A549 (cell line): ENCODE measurements at regions of chr9 and their contacts with region 1.

Region 1: GRCh38 chr9:69971643-69972449 is 71.8 kb upstream of the MAMDC2 start:
- DNase-seq: peak; percentile 52 to 60
- ATAC-seq: peak; percentile 75 to 94
- H3K4me3 ChIP-seq: no peak overlapping the region
- H3K27ac ChIP-seq: no peak overlapping the region
- H3K4me1 ChIP-seq: no peaks in the 10 kb centered on the region
- CTCF ChIP-seq: peak; percentile 84
- EP300 ChIP-seq: no peak
- POLR2A ChIP-seq: no peak
- RAD21 ChIP-seq: peak; percentile 82 to 84

Region 2: DNA sequence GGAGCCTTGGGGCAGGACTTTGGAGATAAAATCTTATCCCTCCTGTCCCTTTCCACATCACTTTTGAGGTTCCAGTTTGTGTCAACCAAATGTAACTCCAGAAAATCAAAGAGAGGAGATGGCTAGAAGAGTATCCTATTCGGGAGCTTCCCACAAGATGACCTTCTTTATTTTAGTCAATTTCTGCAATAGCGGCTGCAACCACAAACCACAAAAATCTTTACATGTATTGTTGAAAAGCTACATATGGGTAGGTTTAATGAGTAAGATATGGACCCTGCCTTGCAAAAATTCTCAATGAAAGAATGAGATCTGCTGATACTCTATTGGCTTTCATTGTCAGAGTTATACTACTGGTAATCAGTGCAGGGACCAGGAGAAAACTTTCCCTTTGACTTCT is 20.4 kb before region 1 on chr9:
- CTCF ChIA-PET with region 1: interaction called, 17 read pairs
- POLR2A ChIA-PET with region 1: no interaction called
- DNase-seq: no peak
- ATAC-seq: no peak
- H3K4me3 ChIP-seq: no peak overlapping the region
- H3K27ac ChIP-seq: no peak overlapping the region
- H3K4me1 ChIP-seq: peaks cover 13% of the 10 kb centered on the region
- CTCF ChIP-seq: no peak
- EP300 ChIP-seq: no peak
- POLR2A ChIP-seq: no peak
- RAD21 ChIP-seq: no peak

Region 3: GRCh38 chr9:69981686-69982450 is 10.0 kb after region 1 on chr9:
- CTCF ChIA-PET with region 1: interaction called, 22 read pairs
- POLR2A ChIA-PET with region 1: no interaction called
- DNase-seq: no peak
- ATAC-seq: no peak
- H3K4me3 ChIP-seq: no peak overlapping the region
- H3K27ac ChIP-seq: no peak overlapping the region
- H3K4me1 ChIP-seq: no peaks in the 10 kb centered on the region
- CTCF ChIP-seq: no peak
- EP300 ChIP-seq: no peak
- POLR2A ChIP-seq: no peak
- RAD21 ChIP-seq: no peak

Region 4: GRCh38 chr9:70111042-70111602 is 139.3 kb after region 1 on chr9:
- CTCF ChIA-PET with region 1: interaction called, 157 read pairs
- POLR2A ChIA-PET with region 1: no interaction called
- DNase-seq: peak; percentile 27 to 66
- ATAC-seq: peak in 1 of 2 experiments; percentile 85; a peak in 4 of 6 replicates
- H3K4me3 ChIP-seq: no peak overlapping the region
- H3K27ac ChIP-seq: no peak overlapping the region
- H3K4me1 ChIP-seq: no peaks in the 10 kb centered on the region
- CTCF ChIP-seq: peak; percentile 69
- EP300 ChIP-seq: no peak
- POLR2A ChIP-seq: no peak
- RAD21 ChIP-seq: peak; percentile 47 to 56; a peak in 4 of 5 replicates

Region 5: GRCh38 chr9:70120834-70121510 is 149.1 kb after region 1 on chr9:
- CTCF ChIA-PET with region 1: interaction called, 15 read pairs
- POLR2A ChIA-PET with region 1: no interaction called
- DNase-seq: peak in 1 of 2 experiments; percentile 52
- ATAC-seq: peak; percentile 92 to 95
- H3K4me3 ChIP-seq: no peak overlapping the region
- H3K27ac ChIP-seq: peak overlapping the region in 1 of 2 experiments; percentile 39; a peak in 2 of 6 replicates
- H3K4me1 ChIP-seq: no peaks in the 10 kb centered on the region
- CTCF ChIP-seq: 0 out of 3 replicates have a peak, but pooled peaks have one; percentile 4
- EP300 ChIP-seq: no peak
- POLR2A ChIP-seq: no peak
- RAD21 ChIP-seq: no peak

Region 6: GRCh38 chr9:70229579-70229978 is 257.7 kb after region 1 on chr9:
- CTCF ChIA-PET with region 1: interaction called, 21 read pairs
- POLR2A ChIA-PET with region 1: no interaction called
- DNase-seq: peak in 1 of 2 experiments; percentile 19
- ATAC-seq: peak in 1 of 2 experiments; percentile 53; a peak in 1 of 6 replicates
- H3K4me3 ChIP-seq: no peak overlapping the region
- H3K27ac ChIP-seq: no peak overlapping the region
- H3K4me1 ChIP-seq: no peaks in the 10 kb centered on the region
- CTCF ChIP-seq: peak; percentile 31; the same call in 1 of the 3 replicates
- EP300 ChIP-seq: no peak
- POLR2A ChIP-seq: no peak
- RAD21 ChIP-seq: peak; percentile 40 to 55; a peak in 4 of 5 replicates

Region 7: DNA sequence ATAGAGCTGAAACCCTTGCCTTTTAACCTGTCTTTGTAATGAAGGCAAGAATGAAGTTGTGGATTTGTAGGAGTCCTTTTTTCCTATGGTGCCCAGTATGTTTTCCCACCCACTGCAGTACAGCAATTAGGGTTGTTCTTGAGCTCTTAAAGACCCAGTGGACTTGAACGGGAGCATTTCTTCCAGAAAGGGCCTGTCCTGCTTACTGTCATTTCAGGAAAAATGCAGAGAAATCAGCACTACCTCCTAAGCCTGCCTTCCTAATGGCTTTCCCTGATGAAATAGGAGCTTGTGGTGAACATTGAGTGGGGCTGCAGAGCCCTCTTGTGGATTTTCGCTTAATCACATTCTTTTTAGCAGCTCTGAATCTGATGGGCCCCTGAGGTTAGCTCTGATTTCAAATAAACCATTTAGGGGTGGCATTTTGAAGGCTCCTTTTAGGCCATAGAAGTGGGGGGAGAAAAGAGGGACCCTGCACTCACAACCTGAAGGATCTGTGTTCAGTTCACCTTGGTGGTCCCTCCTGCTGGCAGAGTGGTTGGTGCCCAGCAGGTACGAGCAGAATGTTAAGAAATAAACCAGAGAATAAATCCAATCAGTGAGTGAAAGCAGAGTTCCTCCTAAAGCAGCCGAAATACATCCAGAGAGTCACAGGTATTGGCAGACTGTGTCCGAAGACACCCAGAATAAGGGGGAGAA is 630.6 kb after region 1 on chr9:
- CTCF ChIA-PET with region 1: interaction called, 21 read pairs
- POLR2A ChIA-PET with region 1: no interaction called
- DNase-seq: peak; percentile 59 to 71
- ATAC-seq: peak; percentile 89 to 97
- H3K4me3 ChIP-seq: no peak overlapping the region
- H3K27ac ChIP-seq: peak overlapping the region; percentile 15 to 36; a peak in 2 of 6 replicates
- H3K4me1 ChIP-seq: no peaks in the 10 kb centered on the region
- CTCF ChIP-seq: peak; percentile 90
- EP300 ChIP-seq: no peak
- POLR2A ChIP-seq: no peak
- RAD21 ChIP-seq: peak; percentile 93 to 94